ENCODE measurements at regions of chr19 and their contacts with region 1.

Region 1: GRCh38 chr19:46990991-46991676 is 28.5 kb upstream of the NPAS1 start:
- DNase-seq: peak; percentile 77 to 96 (median 90)

Region 2: DNA sequence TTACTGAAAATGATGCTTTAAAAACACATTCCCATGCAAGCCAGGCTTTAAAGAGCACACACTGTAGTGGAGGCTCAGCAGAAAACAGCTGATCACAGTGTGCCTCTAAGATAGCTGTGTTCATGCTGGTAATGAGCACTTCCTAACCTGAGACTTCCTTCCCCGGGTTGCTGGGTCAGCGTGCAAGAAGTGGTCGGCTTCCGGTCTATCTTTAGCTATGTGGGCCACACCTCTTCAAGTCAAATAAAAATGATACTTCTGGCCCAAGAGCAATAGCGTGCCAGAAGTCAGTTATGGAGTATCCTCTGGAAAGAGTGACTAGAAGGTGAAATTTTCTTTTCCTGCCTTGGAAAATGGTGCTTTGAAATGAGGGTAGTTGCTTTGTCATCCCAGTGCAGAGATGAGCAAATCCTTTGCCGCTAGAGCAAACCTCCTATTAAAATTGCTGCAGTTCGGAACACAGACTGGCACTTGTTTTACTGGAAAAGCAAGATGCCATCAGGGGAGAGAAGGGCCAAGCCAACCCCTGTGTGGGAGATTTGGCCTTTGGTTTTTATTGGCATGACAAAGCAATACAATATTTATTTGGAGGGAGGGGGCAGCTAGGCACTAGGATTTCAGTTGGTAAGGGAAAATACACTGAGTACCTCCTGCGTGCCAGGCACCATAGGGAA is 66.1 kb before region 1 on chr19:
- intact Hi-C with region 1: loop called (anchors 10 kb)
- DNase-seq: peak in 3 of 42 donors; percentile 8 to 44 (median 41)

Region 3: GRCh38 chr19:46935066-46935663 is 56.0 kb before region 1 on chr19:
- intact Hi-C with region 1: no loop called
- DNase-seq: peak in 1 of 42 donors; percentile 25

Measured in head of caudate nucleus (tissue), 42 donors.